Motor neuron (in vitro differentiated cells): ENCODE measurements at regions of chr2 and their contacts with region 1.

Region 1: GRCh38 chr2:219402665-219403515 is 15.2 kb upstream of the DNPEP start:
- ATAC-seq: peak; percentile 68 to 94 (median 78)
- H3K4me3 ChIP-seq: no peak overlapping the region
- H3K27ac ChIP-seq: no peak overlapping the region
- H3K4me1 ChIP-seq: peaks cover 10 to 14% of the 10 kb centered on the region in 2 donors

Region 2: DNA sequence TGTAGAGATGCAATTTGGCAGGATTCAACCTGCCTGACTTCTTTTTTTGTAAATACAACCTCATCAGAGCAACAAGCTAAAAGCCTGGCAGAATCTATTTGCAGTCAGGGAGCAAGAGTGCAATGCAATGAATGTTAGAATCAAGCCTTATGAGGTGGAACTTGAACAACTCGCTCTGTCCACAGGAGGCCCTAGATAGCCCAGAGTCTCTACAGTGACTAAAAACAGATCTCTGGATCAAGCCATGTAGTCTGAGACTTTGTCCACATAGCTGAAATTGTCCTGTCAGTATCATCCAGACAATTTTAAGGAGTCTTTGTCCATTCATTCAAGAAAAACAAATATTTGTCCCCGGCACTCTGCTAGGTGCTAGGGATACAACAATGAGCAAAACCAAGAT is 475.5 kb before region 1 on chr2:
- in situ Hi-C with region 1: no loop called
- ATAC-seq: peak in 1 of 8 experiments; percentile 73
- H3K4me3 ChIP-seq: no peak overlapping the region
- H3K27ac ChIP-seq: no peak overlapping the region
- H3K4me1 ChIP-seq: no peaks in the 10 kb centered on the region

Region 3: DNA sequence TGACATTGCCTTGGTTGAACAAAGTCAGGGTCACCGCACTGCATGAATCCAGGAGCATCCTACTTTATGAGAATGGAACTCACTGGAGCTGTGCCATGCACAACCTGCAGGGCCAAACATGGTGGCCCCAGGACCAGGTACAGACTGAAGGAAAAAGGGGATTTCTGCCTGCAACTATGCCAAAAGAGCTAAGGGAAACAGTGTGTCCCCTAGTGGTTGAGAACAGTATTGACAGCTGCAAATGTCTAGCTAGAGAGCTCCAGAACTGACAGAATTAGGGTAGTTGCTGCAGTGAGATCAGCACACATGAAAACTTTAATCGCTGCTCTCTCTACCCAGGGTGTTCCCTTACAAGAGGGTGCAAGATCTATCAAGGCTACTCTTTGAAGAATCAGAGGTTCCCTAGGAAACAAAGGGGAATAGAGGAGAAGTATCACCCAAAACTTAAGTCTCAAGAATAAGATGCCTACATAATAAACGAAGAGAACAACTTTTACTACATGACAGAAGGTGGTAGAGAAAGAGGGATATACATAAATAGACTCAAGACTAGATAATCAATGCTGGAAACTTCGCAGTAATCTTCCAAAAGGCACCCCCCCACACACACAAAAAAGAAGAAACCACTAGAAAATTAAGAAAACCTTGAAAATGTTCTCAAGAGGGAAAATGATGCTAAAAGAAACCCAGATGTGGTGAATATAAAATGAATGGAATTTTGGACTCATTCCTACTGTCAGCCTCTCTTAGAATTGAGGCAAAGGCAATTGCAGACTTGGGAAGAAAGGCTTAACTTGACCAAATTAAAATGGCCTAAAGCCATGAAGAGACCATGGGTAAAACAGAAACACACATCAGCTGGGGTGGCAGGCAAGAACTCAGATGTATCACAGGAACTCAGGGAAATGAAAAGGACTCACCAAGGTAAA is 298.5 kb before region 1 on chr2:
- in situ Hi-C with region 1: no loop called
- ATAC-seq: peak in 3 of 8 experiments; percentile 48 to 60 (median 48)
- H3K4me3 ChIP-seq: no peak overlapping the region
- H3K27ac ChIP-seq: no peak overlapping the region
- H3K4me1 ChIP-seq: no peaks in the 10 kb centered on the region

Region 4: DNA sequence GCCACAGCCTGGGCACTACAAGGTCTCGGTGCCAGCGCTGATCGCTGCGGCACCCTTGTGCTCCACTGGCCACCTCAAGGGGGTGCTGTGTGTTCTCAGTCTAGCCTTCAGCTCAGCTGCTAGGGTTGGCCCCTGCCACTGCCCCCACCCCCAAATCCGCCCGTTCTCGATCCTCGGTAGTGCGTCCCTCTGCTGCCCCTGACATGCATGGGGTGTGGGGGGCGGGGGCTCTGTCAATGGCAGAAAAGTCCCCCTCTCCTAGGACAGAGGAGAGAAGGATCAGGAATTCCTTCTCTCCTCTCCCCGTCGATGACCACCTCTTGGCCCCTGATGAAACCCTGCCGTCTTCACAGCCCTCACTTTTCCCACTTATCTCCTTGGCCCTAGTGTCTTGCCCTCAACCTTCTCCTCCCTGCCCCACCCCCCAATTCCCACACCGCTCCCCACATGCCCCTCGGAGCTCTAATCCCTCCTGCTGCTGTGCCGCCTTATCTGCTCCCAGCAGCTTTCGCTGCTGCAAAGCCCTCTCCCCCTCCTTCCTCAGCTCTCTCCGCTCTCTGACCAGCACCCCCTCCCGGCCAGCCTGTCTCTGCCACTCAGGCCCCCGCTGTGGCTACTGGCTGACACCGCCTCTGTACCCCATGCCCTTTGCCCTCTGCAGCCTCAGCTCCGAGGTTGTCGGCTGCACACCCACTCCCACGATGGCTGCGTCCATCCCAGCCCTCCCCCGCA is 107.1 kb after region 1 on chr2:
- in situ Hi-C with region 1: loop called in 1 of 9 experiments (anchors 25 kb)
- ATAC-seq: peak; percentile 37 to 89 (median 53)
- H3K4me3 ChIP-seq: peak overlapping the region in 3 of 5 donors; percentile 2 to 7 (median 5)
- H3K27ac ChIP-seq: peak overlapping the region; percentile 85 to 88
- H3K4me1 ChIP-seq: peaks cover 88% of the 10 kb centered on the region in 2 donors

Region 5: DNA sequence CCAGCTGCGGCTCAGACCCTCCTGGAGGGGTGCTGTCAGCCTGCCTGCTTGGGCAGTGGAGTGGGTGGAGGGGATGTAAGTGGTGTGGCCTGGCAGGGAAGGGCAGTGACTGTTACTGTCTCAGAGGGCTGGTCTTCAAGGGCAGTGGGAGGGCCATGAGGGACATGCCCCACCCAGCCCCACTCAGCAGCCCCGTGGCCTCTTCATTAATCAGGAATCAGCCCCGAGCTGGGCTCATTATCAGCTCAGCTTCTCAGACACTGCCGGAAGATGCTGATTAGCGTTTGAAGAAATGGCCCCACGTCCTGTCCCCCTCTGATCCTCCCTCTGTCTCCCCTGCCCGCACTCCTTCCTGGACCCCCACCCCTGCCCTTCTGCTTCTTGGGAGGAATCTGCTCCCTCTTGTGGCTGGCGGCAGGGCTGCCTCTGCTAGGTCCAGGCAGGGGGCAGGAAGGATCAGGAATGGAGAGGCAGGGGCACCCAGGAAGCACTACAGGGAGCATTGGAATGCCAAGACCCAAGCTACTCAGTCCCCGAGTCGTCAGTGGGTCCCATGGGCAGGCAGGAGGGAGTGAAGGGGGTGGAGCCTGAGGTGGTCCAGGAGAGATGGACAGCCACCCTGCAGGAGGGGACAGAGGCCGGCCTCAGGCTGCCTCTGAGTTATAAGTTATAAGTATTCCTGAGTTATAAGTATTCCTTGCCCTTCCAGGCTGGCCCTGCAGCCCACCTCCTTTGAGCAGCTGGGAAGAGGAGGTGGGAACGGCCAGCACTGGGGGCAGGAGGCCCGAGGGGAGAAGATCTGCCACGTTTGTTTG is 118.4 kb after region 1 on chr2:
- in situ Hi-C with region 1: loop called in 5 of 9 experiments (anchors 10 to 25 kb)
- ATAC-seq: peak; percentile 36 to 77 (median 47)
- H3K4me3 ChIP-seq: peak overlapping the region in 1 of 5 donors; percentile 2
- H3K27ac ChIP-seq: peak overlapping the region; percentile 80 to 84
- H3K4me1 ChIP-seq: peaks cover 80 to 88% of the 10 kb centered on the region in 2 donors

Region 6: GRCh38 chr2:219530048-219530963 is 127.4 kb after region 1 on chr2:
- in situ Hi-C with region 1: loop called in 7 of 9 experiments (anchors 5 to 10 kb)
- ATAC-seq: peak; percentile 71 to 94 (median 83)
- H3K4me3 ChIP-seq: no peak overlapping the region
- H3K27ac ChIP-seq: no peak overlapping the region
- H3K4me1 ChIP-seq: peaks cover 32 to 34% of the 10 kb centered on the region in 2 donors